GM10248 (cell line): ENCODE measurements at regions of chr14 and their contacts with region 1.

Region 1: DNA sequence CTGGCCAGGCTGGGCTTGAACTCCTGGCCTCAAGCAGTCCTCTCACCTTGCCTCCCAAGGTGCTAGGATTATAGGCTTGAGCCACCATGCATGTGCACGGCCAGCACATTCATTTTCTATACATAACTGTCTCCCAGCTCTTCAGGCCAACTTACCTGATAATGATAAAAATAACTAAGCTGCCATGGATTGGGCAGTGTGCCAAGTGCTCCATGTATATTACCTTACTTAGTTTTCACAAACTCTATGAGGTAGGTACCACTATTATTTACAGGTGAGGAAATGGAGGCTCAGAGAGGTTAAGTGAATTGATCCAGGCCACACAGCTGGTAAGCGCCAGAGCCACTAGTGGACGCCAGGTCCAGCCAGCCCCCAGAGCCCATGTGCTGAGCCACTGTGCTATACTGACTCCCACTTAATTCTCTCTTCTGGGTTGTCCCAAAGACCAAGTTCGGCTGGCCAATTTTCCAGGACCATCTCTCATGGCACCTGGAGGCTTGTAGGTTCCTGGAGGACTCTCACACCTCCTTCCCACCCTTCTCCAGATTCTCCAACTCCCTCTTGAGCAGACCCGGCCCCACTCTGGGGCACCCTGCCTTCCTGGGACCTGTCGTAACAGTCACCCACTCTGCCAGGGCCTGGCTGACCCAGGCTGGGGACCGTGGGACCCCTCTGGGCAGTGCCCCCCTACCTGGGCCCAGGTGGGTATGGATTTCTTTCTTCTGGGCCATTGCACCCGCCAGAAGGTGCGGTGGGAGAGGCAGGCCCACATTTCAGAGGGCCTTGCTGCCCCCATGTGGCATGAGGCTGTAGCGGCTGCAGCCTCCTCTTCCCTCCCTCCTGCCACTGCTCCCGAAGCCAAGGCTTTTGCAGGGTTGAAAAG is 30.2 kb upstream of the CIPC start:
- DNase-seq: peak; percentile 77
- CTCF ChIP-seq: peak; percentile 94

Region 2: GRCh38 chr14:76710056-76711010 is 357.5 kb before region 1 on chr14:
- CTCF ChIA-PET with region 1: interaction called, 22 read pairs
- POLR2A ChIA-PET with region 1: no interaction called
- DNase-seq: peak; percentile 59
- CTCF ChIP-seq: peak; percentile 58

Region 3: DNA sequence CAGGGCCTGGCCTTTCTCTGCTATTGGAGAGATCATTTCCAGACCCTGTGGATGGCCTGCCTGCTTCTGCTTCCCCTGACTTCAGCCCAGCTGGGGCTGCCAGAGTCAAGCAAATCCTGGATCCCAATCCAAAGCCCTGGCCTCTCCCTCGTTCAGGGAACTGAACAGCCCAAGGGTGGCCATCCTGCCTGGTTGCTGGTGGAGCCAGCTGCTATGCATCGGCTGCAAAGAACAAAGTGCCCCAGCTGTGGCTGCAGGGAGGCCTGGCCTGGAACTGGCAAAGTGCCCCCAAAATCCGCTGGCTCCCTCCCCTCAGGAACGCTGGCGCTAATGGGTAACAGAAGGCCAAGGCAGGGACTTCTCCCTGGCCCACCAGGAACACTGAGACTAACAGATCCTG is 185.2 kb before region 1 on chr14:
- CTCF ChIA-PET with region 1: interaction called, 586 read pairs
- POLR2A ChIA-PET with region 1: no interaction called
- DNase-seq: no peak
- CTCF ChIP-seq: no peak

Region 4: DNA sequence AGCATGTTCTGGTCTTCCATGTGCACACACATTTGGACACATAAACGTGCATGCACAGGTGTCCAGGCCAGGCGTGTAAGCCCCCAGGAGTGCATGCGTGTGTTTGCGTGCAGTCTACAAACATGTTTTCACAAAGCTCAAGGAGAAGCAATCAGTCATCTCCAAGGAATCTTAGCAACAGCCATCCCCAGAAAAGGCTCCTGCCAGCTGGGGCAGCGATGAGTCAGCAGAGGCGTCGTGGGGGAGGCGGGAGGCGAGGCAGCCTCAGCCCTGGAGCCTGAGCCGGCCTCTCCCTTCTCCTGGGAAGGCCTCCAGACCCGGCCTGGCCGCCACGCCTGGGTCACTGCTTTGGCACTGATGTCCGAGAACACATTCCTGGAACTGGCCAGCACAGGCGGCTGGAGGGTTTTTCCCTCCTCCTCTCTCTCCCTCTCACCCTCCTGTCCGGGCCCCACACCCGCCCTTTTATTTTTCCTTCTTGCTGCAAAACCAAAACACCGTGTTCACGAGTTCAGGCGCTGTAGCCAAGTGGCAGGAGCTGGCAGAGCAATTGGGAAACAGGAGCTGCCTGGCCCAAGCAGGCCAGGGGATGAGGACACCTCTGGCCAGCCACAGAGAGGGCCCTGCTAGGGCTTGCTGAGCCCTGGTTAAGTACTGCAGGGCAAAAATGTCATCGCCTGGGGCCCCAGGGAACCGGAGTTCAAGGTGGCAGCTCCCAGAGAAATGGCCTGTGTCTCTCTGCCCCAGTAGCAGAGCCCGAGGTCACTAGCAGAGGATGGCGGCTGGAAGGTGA is 148.9 kb before region 1 on chr14:
- CTCF ChIA-PET with region 1: interaction called, 399 read pairs
- POLR2A ChIA-PET with region 1: no interaction called
- DNase-seq: no peak
- CTCF ChIP-seq: no peak

Region 5: GRCh38 chr14:76953196-76954000 is 114.5 kb before region 1 on chr14:
- CTCF ChIA-PET with region 1: interaction called, 13 read pairs
- POLR2A ChIA-PET with region 1: no interaction called
- DNase-seq: peak; percentile 59
- CTCF ChIP-seq: no peak

Region 6: GRCh38 chr14:77086017-77086736 is 18.3 kb after region 1 on chr14:
- CTCF ChIA-PET with region 1: interaction called, 189 read pairs
- POLR2A ChIA-PET with region 1: no interaction called
- DNase-seq: peak; percentile 46
- CTCF ChIP-seq: no peak